GM12878 (cell line): ENCODE measurements at regions of chr9 and their contacts with region 1.

Region 1: GRCh38 chr9:27529316-27530278 is at the start of gene MOB3B:
- DNase-seq: no peak
- ATAC-seq: peak; percentile 85
- H3K4me3 ChIP-seq: peak within 1 kb of the TSS; percentile 85
- H3K27ac ChIP-seq: peak within 1 kb of the TSS; percentile 33; the same call in 1 of the 2 replicates
- H3K4me1 ChIP-seq: no peaks in the 10 kb centered on the region; the same call in none of the 2 replicates
- H3K27me3 ChIP-seq: no peaks in the 10 kb centered on the region
- CTCF ChIP-seq: peak; percentile 83 to 89 (median 88)
- EP300 ChIP-seq: no peak
- POLR2A ChIP-seq: 0 out of 2 replicates have a peak, but pooled peaks have one; percentile 35
- RAD21 ChIP-seq: peak; percentile 82
- polyA plus RNA-seq, gene MOB3B: 0.44 to 0.85 TPM

Region 2: GRCh38 chr9:27353474-27354229 is 175.9 kb before region 1 on chr9:
- CTCF ChIA-PET with region 1: interaction called, 11 read pairs
- POLR2A ChIA-PET with region 1: no interaction called
- RAD21 ChIA-PET with region 1: interaction called, 10 read pairs
- SMC1A ChIA-PET with region 1: interaction called, 14 read pairs
- in situ Hi-C with region 1: no loop called
- intact Hi-C with region 1: loop called (anchors 5 kb)
- DNase-seq: peak; percentile 46
- ATAC-seq: peak; percentile 88
- H3K4me3 ChIP-seq: no peak overlapping the region
- H3K27ac ChIP-seq: 0 out of 2 replicates have a peak overlapping the region, but pooled peaks have one; percentile 7
- H3K4me1 ChIP-seq: peaks cover 30% of the 10 kb centered on the region
- H3K27me3 ChIP-seq: no peaks in the 10 kb centered on the region
- CTCF ChIP-seq: no peak
- EP300 ChIP-seq: no peak
- POLR2A ChIP-seq: no peak
- RAD21 ChIP-seq: no peak

Region 3: GRCh38 chr9:27377147-27377807 is 152.3 kb before region 1 on chr9:
- CTCF ChIA-PET with region 1: interaction called, 5 read pairs
- POLR2A ChIA-PET with region 1: no interaction called
- RAD21 ChIA-PET with region 1: interaction called, 5 read pairs
- SMC1A ChIA-PET with region 1: interaction called, 17 read pairs
- in situ Hi-C with region 1: no loop called
- intact Hi-C with region 1: loop called (anchors 2 kb)
- DNase-seq: no peak
- ATAC-seq: peak; percentile 32
- H3K4me3 ChIP-seq: peak overlapping the region; percentile 55
- H3K27ac ChIP-seq: peak overlapping the region; percentile 87
- H3K4me1 ChIP-seq: peaks cover 33% of the 10 kb centered on the region
- H3K27me3 ChIP-seq: no peaks in the 10 kb centered on the region
- CTCF ChIP-seq: no peak
- EP300 ChIP-seq: 0 out of 4 replicates have a peak, but pooled peaks of 1 of the 2 experiments have one; percentile 8
- POLR2A ChIP-seq: no peak
- RAD21 ChIP-seq: no peak

Region 4: GRCh38 chr9:27398982-27399653 is 130.5 kb before region 1 on chr9:
- CTCF ChIA-PET with region 1: no interaction called
- POLR2A ChIA-PET with region 1: no interaction called
- RAD21 ChIA-PET with region 1: no interaction called
- SMC1A ChIA-PET with region 1: no interaction called
- in situ Hi-C with region 1: no loop called
- intact Hi-C with region 1: no loop called
- DNase-seq: no peak
- ATAC-seq: no peak
- H3K4me3 ChIP-seq: no peak overlapping the region
- H3K27ac ChIP-seq: no peak overlapping the region
- H3K4me1 ChIP-seq: no peaks in the 10 kb centered on the region
- H3K27me3 ChIP-seq: no peaks in the 10 kb centered on the region
- CTCF ChIP-seq: no peak
- EP300 ChIP-seq: no peak
- POLR2A ChIP-seq: no peak
- RAD21 ChIP-seq: no peak

Region 5: DNA sequence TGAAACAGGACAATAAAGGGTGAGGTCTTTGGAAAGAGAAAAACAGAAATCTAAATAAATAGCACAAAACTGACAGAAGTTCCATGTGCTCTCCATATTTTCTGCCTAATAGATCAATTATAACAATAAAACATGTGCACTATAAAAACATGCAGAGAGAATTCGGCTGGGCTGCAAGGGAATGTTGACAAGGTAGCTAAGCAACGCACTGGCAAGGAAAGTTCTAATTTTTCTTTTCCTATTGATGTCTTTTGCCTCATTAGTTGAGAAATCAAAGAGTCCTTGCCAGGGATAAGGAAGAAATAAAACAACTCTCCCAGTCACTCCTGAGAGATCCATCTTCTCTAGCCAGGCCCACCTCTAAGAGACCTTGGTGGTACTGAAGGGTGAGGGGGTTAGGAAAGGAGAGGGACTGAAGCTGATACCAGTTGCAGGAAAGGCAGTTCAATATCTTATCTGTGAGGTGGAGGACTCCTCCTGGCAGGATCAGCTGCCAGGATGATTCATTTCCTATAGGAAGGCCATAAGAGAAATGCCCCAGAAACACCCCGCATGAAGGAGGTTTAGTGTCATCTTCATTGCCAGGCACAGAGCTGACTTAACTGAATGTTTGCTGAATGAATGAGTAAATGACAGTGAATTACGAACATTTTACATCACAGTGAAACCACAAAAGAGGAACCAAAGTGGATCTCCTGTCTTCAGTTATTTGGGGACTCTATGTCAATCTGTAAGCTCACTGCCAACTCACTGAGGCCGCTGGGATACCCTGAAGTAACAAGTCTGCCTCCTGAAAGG is 69.2 kb before region 1 on chr9:
- CTCF ChIA-PET with region 1: interaction called, 11 read pairs
- POLR2A ChIA-PET with region 1: interaction called, 3 read pairs
- RAD21 ChIA-PET with region 1: interaction called, 4 read pairs
- SMC1A ChIA-PET with region 1: interaction called, 6 read pairs
- in situ Hi-C with region 1: no loop called
- intact Hi-C with region 1: no loop called
- DNase-seq: peak; percentile 37
- ATAC-seq: peak; percentile 96
- H3K4me3 ChIP-seq: no peak overlapping the region
- H3K27ac ChIP-seq: no peak overlapping the region
- H3K4me1 ChIP-seq: peaks cover 12% of the 10 kb centered on the region; the same call in 1 of the 2 replicates
- H3K27me3 ChIP-seq: no peaks in the 10 kb centered on the region
- CTCF ChIP-seq: no peak
- EP300 ChIP-seq: no peak
- POLR2A ChIP-seq: no peak
- RAD21 ChIP-seq: no peak

Region 6: GRCh38 chr9:27539479-27540441 is 10.2 kb after region 1 on chr9:
- CTCF ChIA-PET with region 1: interaction called, 66 read pairs
- POLR2A ChIA-PET with region 1: interaction called, 21 read pairs
- RAD21 ChIA-PET with region 1: interaction called, 15 read pairs
- SMC1A ChIA-PET with region 1: interaction called, 89 read pairs
- in situ Hi-C with region 1: no loop called
- intact Hi-C with region 1: no loop called
- DNase-seq: peak; percentile 35
- ATAC-seq: peak; percentile 66
- H3K4me3 ChIP-seq: no peak overlapping the region
- H3K27ac ChIP-seq: peak overlapping the region; percentile 4
- H3K4me1 ChIP-seq: peaks cover 10% of the 10 kb centered on the region
- H3K27me3 ChIP-seq: no peaks in the 10 kb centered on the region
- CTCF ChIP-seq: no peak
- EP300 ChIP-seq: 0 out of 4 replicates have a peak, but pooled peaks have one; percentile 9 to 42
- POLR2A ChIP-seq: no peak
- RAD21 ChIP-seq: no peak

Region 7: DNA sequence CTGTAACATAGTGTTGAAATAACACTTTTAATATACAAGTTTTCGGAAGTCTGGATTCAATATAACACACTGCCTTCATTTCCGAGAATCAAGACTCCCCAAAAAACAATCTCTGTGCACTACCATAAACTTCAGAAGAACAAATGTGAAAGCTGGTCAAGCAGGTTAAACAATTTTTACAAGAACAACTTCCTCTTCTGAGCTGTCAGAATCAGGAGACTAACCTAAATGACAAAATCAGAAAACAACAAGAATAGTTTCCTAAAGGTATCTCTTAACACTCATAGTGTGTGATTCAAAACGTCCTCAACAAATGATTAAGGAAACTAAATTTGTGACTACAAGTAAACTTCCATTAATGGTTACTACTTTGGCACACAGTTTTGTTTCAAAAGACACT is 32.1 kb after region 1 on chr9:
- CTCF ChIA-PET with region 1: interaction called, 13 read pairs
- POLR2A ChIA-PET with region 1: no interaction called
- RAD21 ChIA-PET with region 1: no interaction called
- SMC1A ChIA-PET with region 1: no interaction called
- in situ Hi-C with region 1: no loop called
- intact Hi-C with region 1: no loop called
- DNase-seq: no peak
- ATAC-seq: peak; percentile 60
- H3K4me3 ChIP-seq: no peak overlapping the region
- H3K27ac ChIP-seq: no peak overlapping the region
- H3K4me1 ChIP-seq: peaks cover 10% of the 10 kb centered on the region; the same call in 1 of the 2 replicates
- H3K27me3 ChIP-seq: no peaks in the 10 kb centered on the region
- CTCF ChIP-seq: no peak
- EP300 ChIP-seq: no peak
- POLR2A ChIP-seq: no peak
- RAD21 ChIP-seq: no peak